ENCODE measurements at regions of chr19 and their contacts with region 1.

Region 1: GRCh38 chr19:5967994-5968430 is 9.9 kb downstream of the RANBP3 start:
- DNase-seq: peak; percentile 67
- H3K4me3 ChIP-seq: 0 out of 2 replicates have a peak overlapping the region, but pooled peaks have one; percentile 7
- H3K27ac ChIP-seq: peak overlapping the region; percentile 31
- H3K27me3 ChIP-seq: no peaks in the 10 kb centered on the region
- CTCF ChIP-seq: peak; percentile 92

Region 2: GRCh38 chr19:5719961-5720790 is 247.8 kb before region 1 on chr19 and contains the starts of genes CATSPERD and LONP1:
- CTCF ChIA-PET with region 1: no interaction called
- POLR2A ChIA-PET with region 1: interaction called, 11 read pairs
- DNase-seq: peak; percentile 97
- H3K4me3 ChIP-seq: peak within 1 kb of the TSS; percentile 98
- H3K27ac ChIP-seq: peak within 1 kb of the TSS; percentile 98
- H3K27me3 ChIP-seq: no peaks in the 10 kb centered on the region
- CTCF ChIP-seq: peak; percentile 90
- polyA plus RNA-seq, gene CATSPERD: not detected in 2 replicates
- polyA plus RNA-seq, gene LONP1: 37.8 and 48.6 TPM in 2 replicates

Region 3: GRCh38 chr19:5753743-5754142 is 214.3 kb before region 1 on chr19:
- CTCF ChIA-PET with region 1: no interaction called
- POLR2A ChIA-PET with region 1: no interaction called
- DNase-seq: no peak
- H3K4me3 ChIP-seq: no peak overlapping the region
- H3K27ac ChIP-seq: no peak overlapping the region
- H3K27me3 ChIP-seq: no peaks in the 10 kb centered on the region
- CTCF ChIP-seq: no peak

Region 4: DNA sequence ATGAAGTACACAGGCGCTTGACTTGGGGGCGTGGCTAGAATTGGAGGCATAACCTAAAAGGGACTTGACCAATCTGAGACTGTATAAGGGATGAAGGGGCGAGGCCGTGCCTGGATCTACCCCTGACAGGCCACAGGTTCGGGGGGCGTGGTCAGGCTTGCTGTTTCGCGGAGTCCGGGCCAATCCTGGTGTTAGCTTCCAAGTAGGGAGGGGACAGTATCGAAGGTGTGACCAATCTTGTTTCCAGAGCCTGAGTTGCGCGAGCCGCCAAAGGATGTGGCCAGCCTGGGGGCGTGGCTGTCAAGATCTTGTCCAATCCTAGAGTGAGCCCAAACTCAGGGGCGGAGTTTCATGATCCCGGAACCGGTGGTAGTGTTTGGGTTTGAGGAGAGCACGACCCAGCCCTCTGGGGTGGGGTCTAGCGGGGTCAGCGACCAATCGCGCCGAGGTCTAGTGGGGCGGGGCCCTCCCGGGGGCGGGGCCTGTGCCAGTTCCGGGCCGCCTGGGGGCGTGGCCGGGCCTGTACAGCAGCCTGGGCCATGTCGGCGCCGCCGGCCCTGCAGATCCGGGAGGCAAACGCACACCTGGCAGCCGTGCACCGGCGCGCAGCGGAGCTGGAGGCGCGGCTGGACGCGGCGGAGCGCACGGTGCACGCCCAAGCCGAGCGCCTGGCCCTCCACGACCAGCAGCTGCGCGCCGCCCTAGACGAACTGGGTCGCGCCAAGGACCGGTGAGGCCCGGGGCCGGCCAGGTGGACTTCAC is 63.5 kb before region 1 on chr19 and contains the start of gene VMAC:
- CTCF ChIA-PET with region 1: interaction called, 10 read pairs
- POLR2A ChIA-PET with region 1: interaction called, 5 read pairs
- DNase-seq: peak; percentile 100
- H3K4me3 ChIP-seq: peak within 1 kb of the TSS; percentile 86
- H3K27ac ChIP-seq: peak within 1 kb of the TSS; percentile 96
- H3K27me3 ChIP-seq: no peaks in the 10 kb centered on the region
- CTCF ChIP-seq: no peak
- polyA plus RNA-seq, gene VMAC: 2.5 and 2.6 TPM in 2 replicates

Region 5: GRCh38 chr19:5921516-5922160 is 46.4 kb before region 1 on chr19:
- CTCF ChIA-PET with region 1: no interaction called
- POLR2A ChIA-PET with region 1: no interaction called
- DNase-seq: no peak
- H3K4me3 ChIP-seq: no peak overlapping the region
- H3K27ac ChIP-seq: no peak overlapping the region
- H3K27me3 ChIP-seq: no peaks in the 10 kb centered on the region
- CTCF ChIP-seq: no peak

Region 6: DNA sequence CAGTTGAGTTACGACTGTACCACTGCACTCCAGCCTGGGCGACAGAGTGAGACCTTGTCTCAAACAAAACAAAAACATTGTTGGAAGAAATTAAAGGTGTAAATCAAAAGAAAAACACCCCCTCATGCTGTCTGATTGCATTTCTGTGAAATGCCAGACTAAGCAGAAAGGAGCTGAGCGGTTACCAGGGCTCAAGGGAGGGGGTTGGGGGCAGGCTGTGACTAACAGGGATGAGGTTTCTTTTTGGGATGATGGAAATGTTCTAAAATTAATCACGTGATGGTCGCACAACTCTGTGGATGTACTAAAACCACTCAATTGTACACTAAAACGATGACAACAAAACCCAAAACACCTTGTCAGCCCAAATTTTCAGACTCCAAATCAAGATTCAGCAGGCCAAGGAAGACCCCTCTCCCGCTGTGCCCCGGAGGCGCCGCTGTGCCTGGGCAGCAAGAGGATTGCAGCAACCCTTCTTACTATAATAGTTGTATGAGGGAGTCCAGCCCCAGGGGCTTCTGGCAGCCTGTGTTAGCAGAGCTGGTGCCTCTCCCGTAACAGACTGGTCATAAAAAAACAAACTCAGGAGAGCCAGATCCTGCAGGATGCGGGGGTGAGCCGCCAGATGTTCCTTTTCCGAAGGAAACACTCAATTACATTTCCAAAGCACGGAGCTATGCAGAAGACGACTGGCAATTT is 33.1 kb before region 1 on chr19:
- CTCF ChIA-PET with region 1: interaction called, 26 read pairs
- POLR2A ChIA-PET with region 1: interaction called, 22 read pairs
- DNase-seq: peak; percentile 84
- H3K4me3 ChIP-seq: peak overlapping the region; percentile 39
- H3K27ac ChIP-seq: peak overlapping the region; percentile 98
- H3K27me3 ChIP-seq: no peaks in the 10 kb centered on the region
- CTCF ChIP-seq: no peak

Region 7: DNA sequence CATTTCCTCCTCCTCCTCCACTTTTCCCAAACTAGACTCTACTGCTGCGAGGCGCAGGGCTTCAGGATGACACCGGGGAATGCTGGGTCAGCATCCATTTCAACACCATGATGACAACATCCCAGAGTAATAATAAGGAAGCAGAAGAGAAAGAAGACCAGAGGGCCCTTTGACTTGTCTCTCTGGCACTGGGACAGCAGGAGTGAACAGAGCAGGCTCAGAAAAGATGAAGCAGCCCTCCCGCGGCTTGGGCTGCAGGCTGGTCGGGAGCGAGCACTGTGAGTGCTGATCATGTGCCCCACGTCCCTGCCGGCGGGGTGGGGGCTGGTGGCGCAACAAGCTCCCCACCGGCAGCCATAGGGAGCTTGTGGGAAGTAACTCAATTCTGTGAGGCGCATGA is 20.6 kb before region 1 on chr19:
- CTCF ChIA-PET with region 1: interaction called, 72 read pairs
- POLR2A ChIA-PET with region 1: interaction called, 4 read pairs
- DNase-seq: no peak
- H3K4me3 ChIP-seq: no peak overlapping the region
- H3K27ac ChIP-seq: peak overlapping the region; percentile 21
- H3K27me3 ChIP-seq: no peaks in the 10 kb centered on the region
- CTCF ChIP-seq: no peak

Region 8: GRCh38 chr19:5987077-5987818 is 19.2 kb after region 1 on chr19:
- CTCF ChIA-PET with region 1: interaction called, 12 read pairs
- POLR2A ChIA-PET with region 1: no interaction called
- DNase-seq: peak; percentile 51
- H3K4me3 ChIP-seq: peak overlapping the region; percentile 53
- H3K27ac ChIP-seq: no peak overlapping the region
- H3K27me3 ChIP-seq: no peaks in the 10 kb centered on the region
- CTCF ChIP-seq: peak; percentile 95

Region 9: DNA sequence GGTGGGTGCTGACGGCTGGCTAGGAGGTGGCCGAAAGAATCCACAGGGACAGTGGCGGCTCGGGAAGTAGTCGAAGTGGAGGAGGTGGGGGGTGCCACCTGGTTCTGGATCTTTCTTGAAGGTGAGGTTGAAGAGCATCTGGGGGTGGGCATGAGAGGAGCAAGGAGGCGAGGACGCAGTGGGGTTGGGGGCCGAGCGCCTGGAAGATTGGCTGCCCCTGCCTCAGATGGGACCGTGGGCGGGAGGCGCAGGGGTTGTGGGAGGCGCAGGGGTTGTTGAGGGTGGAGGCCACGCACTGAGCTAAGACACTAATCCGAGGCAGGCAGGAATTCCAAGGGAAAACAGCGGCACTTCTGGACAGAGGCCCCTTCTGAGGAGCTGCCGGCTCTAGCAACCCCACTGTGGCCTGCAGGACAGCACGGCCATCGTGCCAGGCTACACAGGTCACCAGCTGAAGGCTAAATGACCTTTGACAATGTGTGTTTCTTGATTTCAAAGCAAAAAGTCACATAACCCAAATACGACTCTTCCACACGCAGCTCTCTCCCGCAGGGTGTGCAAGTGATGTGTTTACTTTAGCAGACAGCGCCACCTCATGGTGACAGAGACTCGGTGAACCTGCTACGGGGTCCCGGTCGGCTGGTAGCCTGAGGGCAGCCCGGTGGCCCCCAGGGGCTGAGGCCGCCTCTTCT is 54.0 kb after region 1 on chr19:
- CTCF ChIA-PET with region 1: interaction called, 16 read pairs
- POLR2A ChIA-PET with region 1: no interaction called
- DNase-seq: peak; percentile 21
- H3K4me3 ChIP-seq: no peak overlapping the region
- H3K27ac ChIP-seq: no peak overlapping the region
- H3K27me3 ChIP-seq: peaks cover 4% of the 10 kb centered on the region
- CTCF ChIP-seq: peak; percentile 60